Right ventricle myocardium inferior (tissue), 1 donor: ENCODE measurements at regions of chr14 and their contacts with region 1.

Region 1: GRCh38 chr14:58244556-58245387 is at the start of gene PSMA3:
- DNase-seq: peak; percentile 99
- ATAC-seq: peak; percentile 95
- total RNA-seq, gene PSMA3: 149 TPM

Region 2: GRCh38 chr14:58353516-58354299 is 108.9 kb after region 1 on chr14:
- intact Hi-C with region 1: loop called (anchors 10 kb)
- DNase-seq: no peak
- ATAC-seq: no peak

Region 3: GRCh38 chr14:58395812-58396788 is 151.3 kb after region 1 on chr14 and contains the start of gene TOMM20L:
- intact Hi-C with region 1: no loop called
- DNase-seq: peak; percentile 90
- ATAC-seq: peak; percentile 95
- total RNA-seq, gene TOMM20L: not detected

Region 4: DNA sequence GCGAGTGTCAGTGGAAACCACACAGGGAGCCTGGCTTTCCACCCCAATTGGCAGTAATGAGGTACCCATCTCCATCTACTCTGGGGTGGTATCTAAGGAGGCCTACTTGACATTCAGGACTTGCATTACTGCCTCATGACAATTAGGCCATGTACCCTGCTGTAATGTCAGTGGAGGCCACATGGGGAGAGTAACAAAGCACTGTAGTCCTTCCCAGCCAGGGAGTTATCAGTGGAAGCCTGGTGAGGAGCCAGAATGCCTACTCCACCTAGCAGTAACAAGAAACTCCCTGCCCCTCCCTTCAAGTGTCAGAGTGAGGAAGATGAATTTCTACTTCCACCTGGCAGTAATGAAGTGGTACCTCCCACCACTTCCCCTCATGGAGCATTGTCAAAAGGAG is 170.1 kb after region 1 on chr14:
- intact Hi-C with region 1: no loop called
- DNase-seq: no peak
- ATAC-seq: peak; percentile 54

Region 5: GRCh38 chr14:58427281-58428117 is 182.7 kb after region 1 on chr14 and contains the starts of genes KIAA0586 and TIMM9:
- intact Hi-C with region 1: loop called (anchors 5 kb)
- DNase-seq: peak; percentile 97
- ATAC-seq: peak; percentile 98
- total RNA-seq, gene KIAA0586: 11.3 TPM
- total RNA-seq, gene TIMM9: 24.1 TPM